SK-N-SH (cell line): ENCODE measurements at regions of chr2 and their contacts with region 1.

Region 1: GRCh38 chr2:74876081-74876886 is 42.4 kb downstream of the HK2 start:
- DNase-seq: peak; percentile 81
- H3K4me3 ChIP-seq: no peak overlapping the region; a peak in 1 of 4 replicates
- H3K27ac ChIP-seq: peak overlapping the region in 1 of 2 experiments; percentile 39; a peak in 1 of 4 replicates
- H3K4me1 ChIP-seq: peaks cover 0 to 3% of the 10 kb centered on the region in 2 experiments; a peak in 1 of 4 replicates
- H3K27me3 ChIP-seq: no peaks in the 10 kb centered on the region
- CTCF ChIP-seq: peak; percentile 79
- EP300 ChIP-seq: no peak
- RAD21 ChIP-seq: peak; percentile 86

Region 2: GRCh38 chr2:74525717-74526648 is 350.3 kb before region 1 on chr2 and contains the start of gene DQX1:
- CTCF ChIA-PET with region 1: no interaction called
- POLR2A ChIA-PET with region 1: no interaction called
- DNase-seq: peak; percentile 52
- H3K4me3 ChIP-seq: no peak within 1 kb of the TSS
- H3K27ac ChIP-seq: no peak within 1 kb of the TSS; a peak in 1 of 4 replicates
- H3K4me1 ChIP-seq: peaks cover 8 to 15% of the 10 kb centered on the region in 2 experiments
- H3K27me3 ChIP-seq: no peaks in the 10 kb centered on the region
- CTCF ChIP-seq: no peak
- EP300 ChIP-seq: no peak
- RAD21 ChIP-seq: no peak
- polyA plus RNA-seq, gene DQX1: 1.6 and 1.8 TPM in 2 replicates

Region 3: DNA sequence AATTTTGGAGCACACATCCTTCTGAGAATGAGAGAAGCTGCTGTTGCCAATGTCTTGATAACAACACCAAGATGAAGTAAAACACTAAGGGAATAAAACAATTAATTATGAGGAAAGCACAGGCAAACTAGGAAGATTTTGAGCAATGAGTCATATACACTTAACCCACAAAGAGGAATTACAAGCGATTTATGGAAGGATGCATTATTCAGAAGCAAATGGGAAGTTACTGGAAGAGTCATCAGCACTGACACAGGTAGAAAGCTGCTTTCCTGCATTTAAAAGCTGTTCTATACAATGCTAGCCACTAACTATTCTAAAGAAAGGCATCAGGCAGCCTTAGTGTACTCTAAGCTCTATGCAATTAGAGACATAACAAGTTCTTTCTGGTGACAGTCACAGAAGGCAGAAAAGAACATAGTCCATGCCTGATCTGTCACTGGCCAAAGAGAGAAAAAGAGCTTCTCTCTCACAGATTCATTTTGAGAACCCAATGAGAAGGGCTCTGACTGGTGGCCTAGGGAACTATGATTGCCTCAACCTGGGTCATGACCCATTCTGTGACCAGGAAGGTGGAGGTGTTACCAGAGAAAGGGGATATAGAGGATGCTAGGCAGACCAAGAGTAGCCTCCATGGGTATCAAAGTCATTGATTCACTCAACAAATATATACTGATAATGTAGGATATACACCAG is 273.6 kb before region 1 on chr2:
- CTCF ChIA-PET with region 1: no interaction called
- POLR2A ChIA-PET with region 1: no interaction called
- DNase-seq: no peak
- H3K4me3 ChIP-seq: no peak overlapping the region
- H3K27ac ChIP-seq: peak overlapping the region in 1 of 2 experiments; percentile 89; a peak in 2 of 4 replicates
- H3K4me1 ChIP-seq: peaks cover 3 to 4% of the 10 kb centered on the region in 2 experiments; a peak in 3 of 4 replicates
- H3K27me3 ChIP-seq: peaks cover 9% of the 10 kb centered on the region; the same call in 1 of the 2 replicates
- CTCF ChIP-seq: no peak
- EP300 ChIP-seq: no peak
- RAD21 ChIP-seq: no peak

Region 4: GRCh38 chr2:74690571-74690970 is 185.7 kb before region 1 on chr2:
- CTCF ChIA-PET with region 1: interaction called, 65 read pairs
- POLR2A ChIA-PET with region 1: interaction called, 4 read pairs
- DNase-seq: peak; percentile 68
- H3K4me3 ChIP-seq: no peak overlapping the region
- H3K27ac ChIP-seq: no peak overlapping the region
- H3K4me1 ChIP-seq: no peaks in the 10 kb centered on the region; a peak in 1 of 4 replicates
- H3K27me3 ChIP-seq: no peaks in the 10 kb centered on the region
- CTCF ChIP-seq: peak; percentile 92
- EP300 ChIP-seq: no peak
- RAD21 ChIP-seq: peak; percentile 98

Region 5: GRCh38 chr2:74841641-74842040 is 34.6 kb before region 1 on chr2:
- CTCF ChIA-PET with region 1: interaction called, 66 read pairs
- POLR2A ChIA-PET with region 1: no interaction called
- DNase-seq: no peak
- H3K4me3 ChIP-seq: no peak overlapping the region
- H3K27ac ChIP-seq: no peak overlapping the region
- H3K4me1 ChIP-seq: peaks cover 40 to 57% of the 10 kb centered on the region in 2 experiments
- H3K27me3 ChIP-seq: no peaks in the 10 kb centered on the region
- CTCF ChIP-seq: no peak
- EP300 ChIP-seq: no peak
- RAD21 ChIP-seq: no peak

Region 6: DNA sequence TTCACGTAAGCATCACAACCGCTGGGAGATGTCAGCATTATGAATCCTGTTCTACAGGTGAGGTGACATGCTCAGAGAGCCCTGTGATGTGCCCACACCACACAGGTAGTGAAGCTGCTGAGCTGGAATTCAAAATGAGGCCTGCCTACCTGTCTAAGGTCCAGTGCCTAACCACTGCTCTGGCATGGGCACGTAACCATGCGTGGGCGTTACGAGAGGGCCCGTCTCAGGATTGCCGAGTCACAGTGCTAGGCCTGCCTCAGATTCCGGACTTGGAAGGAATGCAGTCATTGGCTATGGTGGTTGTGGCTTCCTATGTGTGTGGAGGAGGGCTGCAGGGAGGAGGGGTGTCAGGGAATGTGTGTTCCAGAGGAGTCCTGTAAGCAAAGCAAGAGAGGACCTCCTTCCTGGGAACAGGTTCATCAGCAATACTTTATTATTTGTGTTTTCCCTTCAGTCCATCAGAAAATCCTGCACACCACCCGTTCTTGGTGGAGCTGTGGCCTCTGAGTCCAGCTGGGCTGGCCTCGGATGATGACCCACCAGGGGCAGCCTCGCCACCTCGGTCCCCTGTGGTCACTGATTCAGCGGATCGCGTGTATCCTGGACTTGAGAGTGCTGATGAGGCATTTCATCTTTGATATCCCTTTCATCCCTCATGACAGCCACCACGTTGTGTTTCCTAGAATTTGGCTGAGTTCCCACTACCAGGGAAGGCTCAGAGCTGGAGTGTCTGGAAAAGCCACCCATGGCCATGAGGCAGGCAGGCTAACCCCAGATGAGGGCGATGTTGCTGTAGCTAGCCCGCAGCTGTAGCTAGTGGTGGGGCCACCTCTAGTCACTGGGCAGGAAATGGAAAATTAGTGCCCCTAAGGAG is 11.2 kb before region 1 on chr2:
- CTCF ChIA-PET with region 1: interaction called, 36 read pairs
- POLR2A ChIA-PET with region 1: interaction called, 4 read pairs
- DNase-seq: peak; percentile 46
- H3K4me3 ChIP-seq: no peak overlapping the region
- H3K27ac ChIP-seq: no peak overlapping the region; a peak in 1 of 4 replicates
- H3K4me1 ChIP-seq: peaks cover 4 to 49% of the 10 kb centered on the region in 2 experiments; a peak in 3 of 4 replicates
- H3K27me3 ChIP-seq: no peaks in the 10 kb centered on the region
- CTCF ChIP-seq: no peak
- EP300 ChIP-seq: no peak
- RAD21 ChIP-seq: no peak

Region 7: GRCh38 chr2:74887445-74887951 is 11.2 kb after region 1 on chr2:
- CTCF ChIA-PET with region 1: interaction called, 23 read pairs
- POLR2A ChIA-PET with region 1: no interaction called
- DNase-seq: no peak
- H3K4me3 ChIP-seq: no peak overlapping the region
- H3K27ac ChIP-seq: peak overlapping the region; percentile 16 to 36; a peak in 3 of 4 replicates
- H3K4me1 ChIP-seq: peaks cover 5 to 13% of the 10 kb centered on the region in 2 experiments; a peak in 1 of 4 replicates
- H3K27me3 ChIP-seq: no peaks in the 10 kb centered on the region
- CTCF ChIP-seq: no peak
- EP300 ChIP-seq: no peak
- RAD21 ChIP-seq: no peak

Region 8: GRCh38 chr2:75035444-75036353 is 159.4 kb after region 1 on chr2:
- CTCF ChIA-PET with region 1: no interaction called
- POLR2A ChIA-PET with region 1: no interaction called
- DNase-seq: no peak
- H3K4me3 ChIP-seq: no peak overlapping the region
- H3K27ac ChIP-seq: no peak overlapping the region
- H3K4me1 ChIP-seq: no peaks in the 10 kb centered on the region
- H3K27me3 ChIP-seq: no peaks in the 10 kb centered on the region; the same call in 1 of the 2 replicates
- CTCF ChIP-seq: no peak
- EP300 ChIP-seq: no peak
- RAD21 ChIP-seq: no peak

Region 9: DNA sequence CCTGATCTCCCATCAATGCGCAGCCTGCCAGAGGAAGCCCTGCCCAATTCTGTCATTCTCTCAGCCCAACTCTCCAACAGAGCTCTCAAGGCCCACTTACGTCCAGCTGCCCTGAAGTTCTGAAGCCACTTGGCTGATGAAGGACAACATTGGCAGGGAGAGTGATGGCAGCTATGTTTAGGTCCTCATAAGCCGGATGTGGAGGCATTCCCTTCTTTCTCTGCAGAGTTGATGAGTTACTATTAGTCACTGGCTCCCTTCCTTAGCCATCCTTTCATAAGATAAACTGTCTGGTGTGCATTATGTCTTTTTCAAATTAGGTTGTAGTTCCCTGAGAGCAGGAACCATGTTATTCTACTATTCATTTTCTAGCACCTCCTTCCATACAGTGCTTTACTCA is 345.6 kb after region 1 on chr2:
- CTCF ChIA-PET with region 1: no interaction called
- POLR2A ChIA-PET with region 1: no interaction called
- DNase-seq: no peak
- H3K4me3 ChIP-seq: no peak overlapping the region
- H3K27ac ChIP-seq: peak overlapping the region in 1 of 2 experiments; percentile 27; a peak in 2 of 4 replicates
- H3K4me1 ChIP-seq: peaks cover 0 to 12% of the 10 kb centered on the region in 2 experiments; a peak in 1 of 4 replicates
- H3K27me3 ChIP-seq: no peaks in the 10 kb centered on the region
- CTCF ChIP-seq: no peak
- EP300 ChIP-seq: no peak
- RAD21 ChIP-seq: no peak